Activated CD8-positive, alpha-beta T cell treated with anti-CD3 and anti-CD28 coated beads for 36 hours (primary cell): ENCODE measurements at regions of chr10 and their contacts with region 1.

Region 1: DNA sequence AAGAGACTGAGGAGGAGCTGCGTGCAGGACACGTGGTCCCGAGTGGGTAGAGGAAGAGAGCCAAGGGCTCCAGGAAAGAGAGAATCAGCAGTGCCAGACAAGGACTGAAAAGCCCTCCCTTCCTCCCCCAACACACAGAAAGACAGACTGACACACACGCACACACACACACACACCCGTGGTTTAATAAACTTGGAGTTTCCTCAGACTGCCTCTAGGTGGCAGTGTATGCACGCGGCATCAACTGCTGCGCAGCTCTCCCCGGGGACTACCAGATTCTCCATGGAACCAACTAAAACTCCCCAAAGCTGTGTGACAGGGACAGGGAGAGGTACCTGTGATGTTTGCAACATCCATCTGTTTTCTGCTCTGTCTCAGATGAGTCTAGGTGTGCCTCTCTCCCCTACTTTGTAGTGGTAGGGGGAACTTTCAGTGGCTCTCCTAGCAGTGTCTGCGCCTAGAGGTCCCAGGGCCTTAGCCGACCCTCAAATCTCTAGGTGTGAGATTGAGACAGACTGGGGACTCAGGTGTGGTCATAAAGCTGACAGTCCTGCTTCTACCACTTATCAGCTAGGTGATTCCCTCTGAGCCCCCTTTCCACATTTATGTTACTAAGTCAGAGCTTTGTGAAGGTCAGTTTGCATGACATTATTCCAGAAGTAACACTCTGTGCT is 9.3 kb upstream of the TSPAN14 start:
- DNase-seq: peak; percentile 55
- ATAC-seq: peak; percentile 85
- H3K4me3 Mint-ChIP-seq: no peak overlapping the region
- H3K27ac Mint-ChIP-seq: peak overlapping the region; percentile 52
- H3K4me1 Mint-ChIP-seq: peaks cover 45% of the 10 kb centered on the region
- H3K27me3 Mint-ChIP-seq: no peaks in the 10 kb centered on the region
- CTCF ChIP-seq: peak; percentile 51

Region 2: DNA sequence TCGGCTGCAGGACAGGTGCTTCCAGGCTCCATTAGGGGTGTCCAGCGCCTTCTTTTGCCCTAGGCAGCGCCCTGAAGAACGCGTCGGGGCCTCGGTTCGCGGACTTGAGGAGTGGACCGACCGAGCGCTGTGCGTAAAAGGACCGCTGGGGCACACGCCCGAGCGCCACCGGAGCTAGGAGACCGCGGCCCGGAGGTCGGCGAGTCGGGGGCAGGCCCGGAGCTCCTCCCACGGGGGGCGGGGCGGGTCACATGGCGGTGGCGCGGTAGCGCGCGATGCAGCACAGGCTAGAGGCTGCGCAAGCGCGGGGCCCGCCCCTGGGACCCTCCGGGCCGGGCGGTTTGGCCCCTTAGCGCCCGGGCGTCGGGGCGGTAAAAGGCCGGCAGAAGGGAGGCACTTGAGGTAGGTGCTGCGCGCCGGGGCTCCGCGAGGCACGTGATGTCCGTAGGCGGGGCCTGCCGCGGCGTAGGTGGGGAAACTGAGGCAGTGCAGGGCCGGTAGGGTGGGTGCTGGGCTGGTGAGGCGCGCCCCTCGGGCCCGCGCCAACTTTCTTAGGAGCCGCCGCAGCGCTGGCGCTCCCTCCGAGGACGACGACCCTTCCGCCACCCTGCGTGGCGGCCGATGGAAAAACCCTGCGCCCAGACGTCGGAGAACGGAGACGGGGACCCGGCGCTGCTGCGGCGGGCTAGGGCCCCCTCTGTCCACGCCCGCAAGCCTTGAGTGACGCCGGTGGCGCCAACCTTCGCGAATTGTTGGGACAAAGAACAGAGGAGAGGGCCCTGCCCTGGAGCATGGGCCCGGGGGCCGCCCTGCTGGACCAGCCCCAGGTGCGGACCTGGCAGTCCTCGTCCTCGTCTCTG is 36.3 kb before region 1 on chr10 and contains the start of gene PRXL2A:
- CTCF ChIA-PET with region 1: interaction called, 12 read pairs
- POLR2A ChIA-PET with region 1: interaction called, 6 read pairs
- intact Hi-C with region 1: no loop called
- DNase-seq: peak; percentile 92
- ATAC-seq: peak; percentile 92
- H3K4me3 Mint-ChIP-seq: peak within 1 kb of the TSS; percentile 76
- H3K27ac Mint-ChIP-seq: peak within 1 kb of the TSS; percentile 81
- H3K4me1 Mint-ChIP-seq: peaks cover 34% of the 10 kb centered on the region
- H3K27me3 Mint-ChIP-seq: peaks cover 3% of the 10 kb centered on the region
- CTCF ChIP-seq: no peak
- total RNA-seq, gene PRXL2A: 21.0 to 22.7 TPM

Region 3: DNA sequence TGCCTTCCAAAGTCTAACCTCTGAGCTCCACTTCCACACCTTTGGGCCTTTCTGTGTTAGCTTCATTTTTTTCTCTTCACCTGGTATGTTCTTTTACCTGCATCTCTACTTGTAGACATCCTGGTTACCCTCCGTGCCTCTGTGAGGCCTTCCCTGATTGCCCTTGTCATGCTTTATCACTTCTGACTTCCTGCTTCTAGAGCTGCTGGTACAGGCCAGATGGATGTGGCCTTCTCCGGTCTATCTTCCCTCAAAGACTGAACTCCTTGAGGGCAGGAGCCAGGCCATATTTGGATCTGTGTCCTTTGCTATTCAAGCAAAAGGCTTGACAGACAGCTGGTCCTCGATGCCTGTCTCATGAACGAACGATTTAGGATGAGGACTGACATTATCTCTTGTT is 13.2 kb before region 1 on chr10:
- CTCF ChIA-PET with region 1: interaction called, 20 read pairs
- POLR2A ChIA-PET with region 1: interaction called, 3 read pairs
- intact Hi-C with region 1: no loop called
- DNase-seq: no peak
- ATAC-seq: no peak
- H3K4me3 Mint-ChIP-seq: no peak overlapping the region
- H3K27ac Mint-ChIP-seq: no peak overlapping the region
- H3K4me1 Mint-ChIP-seq: peaks cover 3% of the 10 kb centered on the region
- H3K27me3 Mint-ChIP-seq: no peaks in the 10 kb centered on the region
- CTCF ChIP-seq: no peak

Region 4: DNA sequence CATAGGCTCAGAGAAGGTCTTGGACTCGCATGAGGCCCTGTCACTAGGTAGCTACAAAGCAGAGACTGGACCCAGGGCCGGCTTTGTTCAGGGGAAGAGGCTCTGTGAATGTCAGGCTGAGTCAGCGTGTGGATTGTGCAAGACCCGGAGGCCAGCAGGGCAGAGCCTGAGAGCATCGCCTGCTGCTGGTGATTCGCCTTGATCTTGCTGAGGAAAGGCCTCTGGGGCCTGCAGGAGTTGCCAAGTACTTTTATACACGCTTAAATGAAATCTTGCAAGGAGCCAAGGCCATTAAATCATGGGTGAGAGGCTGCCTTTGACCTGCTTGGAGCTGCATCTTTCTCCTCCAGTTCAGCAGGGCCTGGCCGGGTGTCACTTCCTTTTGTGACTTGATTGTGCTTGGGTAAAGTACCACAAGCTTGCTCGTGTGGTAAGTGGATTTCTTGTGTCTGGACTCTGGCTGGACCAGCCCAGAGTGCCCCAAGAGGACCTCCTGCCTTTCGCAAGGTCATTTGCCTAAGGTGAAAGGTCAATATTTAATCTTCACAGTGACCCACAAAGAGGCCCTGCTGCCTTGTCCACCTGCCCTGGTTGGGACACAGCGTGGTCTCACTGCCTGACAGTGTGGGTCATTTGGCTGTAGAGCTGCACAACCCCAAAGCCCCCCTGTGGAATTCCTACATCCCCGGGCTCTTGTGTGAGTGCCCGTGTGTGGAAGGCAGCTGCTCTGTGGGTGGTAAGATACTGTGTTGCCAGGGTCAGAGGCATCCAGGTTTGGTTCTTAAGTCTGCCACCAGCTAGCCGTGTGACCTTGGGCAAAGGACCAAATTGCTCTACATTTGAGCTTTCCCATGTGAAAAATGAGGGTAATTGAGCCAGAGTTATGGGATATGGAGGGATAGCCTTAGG is 54.3 kb after region 1 on chr10:
- CTCF ChIA-PET with region 1: interaction called, 1,114 read pairs
- POLR2A ChIA-PET with region 1: interaction called, 27 read pairs
- intact Hi-C with region 1: no loop called
- DNase-seq: peak; percentile 89
- ATAC-seq: peak; percentile 78
- H3K4me3 Mint-ChIP-seq: peak overlapping the region; percentile 56
- H3K27ac Mint-ChIP-seq: peak overlapping the region; percentile 90
- H3K4me1 Mint-ChIP-seq: peaks cover 96% of the 10 kb centered on the region
- H3K27me3 Mint-ChIP-seq: no peaks in the 10 kb centered on the region
- CTCF ChIP-seq: no peak

Region 5: DNA sequence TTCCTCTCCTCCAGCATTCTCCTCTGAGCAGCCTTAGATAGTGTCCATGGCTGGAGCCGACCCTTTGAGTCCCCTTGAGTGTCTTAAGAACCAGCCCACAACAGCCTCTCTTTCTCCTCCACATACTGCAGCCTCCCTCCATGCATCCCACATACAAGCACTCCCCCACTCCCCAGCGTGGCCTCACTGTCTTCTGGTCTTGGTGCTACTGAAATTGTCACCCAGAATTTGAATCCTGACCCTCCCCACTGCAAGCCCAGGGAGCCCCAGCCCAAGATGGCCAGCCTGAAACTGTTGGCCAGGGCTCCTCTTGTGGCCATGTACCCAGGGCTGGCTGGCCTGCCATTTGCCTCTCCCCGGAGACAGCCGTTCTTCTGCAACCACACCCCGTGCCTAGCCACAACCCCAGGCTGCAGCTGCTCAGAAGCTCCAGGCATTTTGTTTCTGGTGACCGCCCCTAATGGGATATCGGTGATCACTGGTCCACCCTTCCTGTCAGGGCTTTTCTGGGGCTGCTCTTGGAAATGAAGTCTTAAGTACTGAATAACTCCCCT is 74.1 kb after region 1 on chr10:
- CTCF ChIA-PET with region 1: interaction called, 1,114 read pairs
- POLR2A ChIA-PET with region 1: no interaction called
- intact Hi-C with region 1: no loop called
- DNase-seq: no peak
- ATAC-seq: no peak
- H3K4me3 Mint-ChIP-seq: no peak overlapping the region
- H3K27ac Mint-ChIP-seq: peak overlapping the region; percentile 6
- H3K4me1 Mint-ChIP-seq: peaks cover 41% of the 10 kb centered on the region
- H3K27me3 Mint-ChIP-seq: no peaks in the 10 kb centered on the region
- CTCF ChIP-seq: no peak

Region 6: GRCh38 chr10:80583685-80584084 is 138.9 kb after region 1 on chr10:
- CTCF ChIA-PET with region 1: no interaction called
- POLR2A ChIA-PET with region 1: no interaction called
- intact Hi-C with region 1: no loop called
- DNase-seq: no peak
- ATAC-seq: no peak
- H3K4me3 Mint-ChIP-seq: no peak overlapping the region
- H3K27ac Mint-ChIP-seq: no peak overlapping the region
- H3K4me1 Mint-ChIP-seq: no peaks in the 10 kb centered on the region
- H3K27me3 Mint-ChIP-seq: no peaks in the 10 kb centered on the region
- CTCF ChIP-seq: no peak

Region 7: GRCh38 chr10:80599424-80599847 is 154.7 kb after region 1 on chr10:
- CTCF ChIA-PET with region 1: interaction called, 14 read pairs
- POLR2A ChIA-PET with region 1: no interaction called
- intact Hi-C with region 1: no loop called
- DNase-seq: peak; percentile 58
- ATAC-seq: peak; percentile 90
- H3K4me3 Mint-ChIP-seq: no peak overlapping the region
- H3K27ac Mint-ChIP-seq: no peak overlapping the region
- H3K4me1 Mint-ChIP-seq: no peaks in the 10 kb centered on the region
- H3K27me3 Mint-ChIP-seq: no peaks in the 10 kb centered on the region
- CTCF ChIP-seq: peak; percentile 63